Breast epithelium (tissue), 4 donors: ENCODE measurements at regions of chr2 and their contacts with region 1.

Region 1: DNA sequence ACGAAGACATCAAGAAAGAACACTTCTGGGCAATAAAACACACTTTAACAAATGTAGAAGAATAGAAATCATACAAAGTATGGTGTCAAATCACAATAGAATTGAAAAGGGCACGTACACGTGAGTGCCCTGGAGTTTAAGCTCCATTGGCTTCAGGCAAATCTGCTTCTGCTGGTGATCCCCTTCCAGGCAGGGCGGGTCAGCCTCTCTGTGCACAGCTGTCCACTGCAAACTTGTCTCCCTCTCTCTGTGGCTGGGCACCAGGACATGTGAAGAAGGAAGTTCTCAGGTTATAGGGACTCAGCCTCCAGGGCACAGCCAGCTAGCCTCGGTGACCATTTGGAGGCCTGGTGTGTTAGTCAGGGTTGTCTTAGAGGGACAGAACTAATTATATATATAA is 66.0 kb downstream of the ST3GAL5 start:
- DNase-seq: no peak
- H3K4me3 ChIP-seq: no peak overlapping the region
- H3K27ac ChIP-seq: no peak overlapping the region
- H3K4me1 ChIP-seq: no peaks in the 10 kb centered on the region
- H3K27me3 ChIP-seq: peaks cover 0 to 4% of the 10 kb centered on the region in 2 donors
- CTCF ChIP-seq: no peak
- POLR2A ChIP-seq: no peak

Region 2: GRCh38 chr2:85843543-85843942 is 20.8 kb after region 1 on chr2:
- intact Hi-C with region 1: no loop called
- DNase-seq: no peak
- H3K4me3 ChIP-seq: no peak overlapping the region
- H3K27ac ChIP-seq: no peak overlapping the region
- H3K4me1 ChIP-seq: no peaks in the 10 kb centered on the region
- H3K27me3 ChIP-seq: no peaks in the 10 kb centered on the region
- CTCF ChIP-seq: no peak
- POLR2A ChIP-seq: no peak

Region 3: GRCh38 chr2:86079981-86080911 is 257.5 kb after region 1 on chr2:
- intact Hi-C with region 1: loop called (anchors 5 kb)
- DNase-seq: peak; percentile 66 to 78
- H3K4me3 ChIP-seq: no peak overlapping the region
- H3K27ac ChIP-seq: peak overlapping the region in 1 of 2 donors; percentile 19
- H3K4me1 ChIP-seq: no peaks in the 10 kb centered on the region
- H3K27me3 ChIP-seq: no peaks in the 10 kb centered on the region
- CTCF ChIP-seq: peak; percentile 29 to 79 (median 76)
- POLR2A ChIP-seq: no peak